ENCODE measurements at regions of chr12 and their contacts with region 1.

Region 1: GRCh38 chr12:92439407-92439779 is 263.4 kb upstream of the PLEKHG7 start:
- DNase-seq: no peak
- ATAC-seq: no peak
- H3K4me3 ChIP-seq: no peak overlapping the region
- H3K4me3 Mint-ChIP-seq: no peak overlapping the region
- H3K27ac ChIP-seq: no peak overlapping the region
- H3K27ac Mint-ChIP-seq: no peak overlapping the region
- H3K4me1 ChIP-seq: peaks cover 0 to 7% of the 10 kb centered on the region in 2 donors
- H3K4me1 Mint-ChIP-seq: peaks cover 8 to 47% (median 20%) of the 10 kb centered on the region in 7 donors
- H3K27me3 ChIP-seq: no peaks in the 10 kb centered on the region
- H3K27me3 Mint-ChIP-seq: peaks cover 0 to 3% (median 0%) of the 10 kb centered on the region in 5 donors

Region 2: DNA sequence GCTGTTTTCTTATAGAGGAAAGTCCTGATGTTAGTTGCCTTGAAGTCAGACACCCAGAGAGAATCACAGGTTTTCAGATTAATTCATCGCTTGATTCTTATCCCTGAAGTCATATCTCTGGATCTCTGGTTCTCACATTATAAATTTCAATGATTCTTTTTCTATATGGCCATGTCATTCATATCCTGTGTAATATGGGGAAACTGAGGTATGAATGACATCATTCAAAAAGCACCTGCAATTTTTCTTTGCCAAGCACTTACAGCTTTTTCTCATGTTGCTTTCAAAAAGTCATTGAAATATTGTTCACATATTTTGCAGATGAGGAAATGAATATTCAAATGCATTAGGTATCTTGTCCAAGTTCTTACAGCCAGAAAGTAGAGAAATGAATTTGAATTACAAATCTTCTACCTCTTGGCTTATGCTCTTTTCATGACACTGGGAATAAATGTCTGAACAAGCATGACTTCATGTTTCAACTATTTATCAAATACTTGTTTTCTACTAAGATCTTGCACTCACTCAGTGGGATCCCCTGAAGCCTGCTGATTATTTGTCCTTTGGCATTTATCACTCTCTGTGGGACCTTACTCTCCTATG is 26.6 kb before region 1 on chr12:
- CTCF ChIA-PET with region 1: no interaction called
- POLR2A ChIA-PET with region 1: no interaction called
- intact Hi-C with region 1: no loop called
- DNase-seq: no peak
- ATAC-seq: no peak
- H3K4me3 ChIP-seq: no peak overlapping the region
- H3K4me3 Mint-ChIP-seq: no peak overlapping the region
- H3K27ac ChIP-seq: no peak overlapping the region
- H3K27ac Mint-ChIP-seq: peak overlapping the region in 1 of 9 donors; percentile 3
- H3K4me1 ChIP-seq: peaks cover 7 to 10% of the 10 kb centered on the region in 2 donors
- H3K4me1 Mint-ChIP-seq: peaks cover 16 to 60% (median 39%) of the 10 kb centered on the region in 7 donors
- H3K27me3 ChIP-seq: no peaks in the 10 kb centered on the region
- H3K27me3 Mint-ChIP-seq: no peaks in the 10 kb centered on the region

Region 3: GRCh38 chr12:92424338-92424737 is 15.1 kb before region 1 on chr12:
- CTCF ChIA-PET with region 1: no interaction called
- POLR2A ChIA-PET with region 1: interaction called, 4 read pairs
- intact Hi-C with region 1: loop called in 1 of 2 experiments (anchors 2 kb)
- DNase-seq: no peak
- ATAC-seq: no peak
- H3K4me3 ChIP-seq: no peak overlapping the region
- H3K4me3 Mint-ChIP-seq: no peak overlapping the region
- H3K27ac ChIP-seq: no peak overlapping the region
- H3K27ac Mint-ChIP-seq: peak overlapping the region in 2 of 9 donors; percentile 7 to 55
- H3K4me1 ChIP-seq: peaks cover 0 to 4% of the 10 kb centered on the region in 2 donors
- H3K4me1 Mint-ChIP-seq: peaks cover 16 to 60% (median 39%) of the 10 kb centered on the region in 7 donors
- H3K27me3 ChIP-seq: no peaks in the 10 kb centered on the region
- H3K27me3 Mint-ChIP-seq: no peaks in the 10 kb centered on the region

Region 4: GRCh38 chr12:92457458-92458180 is 18.2 kb after region 1 on chr12:
- CTCF ChIA-PET with region 1: no interaction called
- POLR2A ChIA-PET with region 1: no interaction called
- intact Hi-C with region 1: loop called in 1 of 2 experiments (anchors 2 kb)
- DNase-seq: no peak
- ATAC-seq: no peak
- H3K4me3 ChIP-seq: no peak overlapping the region
- H3K4me3 Mint-ChIP-seq: no peak overlapping the region
- H3K27ac ChIP-seq: no peak overlapping the region
- H3K27ac Mint-ChIP-seq: no peak overlapping the region
- H3K4me1 ChIP-seq: peaks cover 4 to 22% of the 10 kb centered on the region in 2 donors
- H3K4me1 Mint-ChIP-seq: peaks cover 5 to 36% (median 12%) of the 10 kb centered on the region in 7 donors
- H3K27me3 ChIP-seq: no peaks in the 10 kb centered on the region
- H3K27me3 Mint-ChIP-seq: no peaks in the 10 kb centered on the region

Region 5: DNA sequence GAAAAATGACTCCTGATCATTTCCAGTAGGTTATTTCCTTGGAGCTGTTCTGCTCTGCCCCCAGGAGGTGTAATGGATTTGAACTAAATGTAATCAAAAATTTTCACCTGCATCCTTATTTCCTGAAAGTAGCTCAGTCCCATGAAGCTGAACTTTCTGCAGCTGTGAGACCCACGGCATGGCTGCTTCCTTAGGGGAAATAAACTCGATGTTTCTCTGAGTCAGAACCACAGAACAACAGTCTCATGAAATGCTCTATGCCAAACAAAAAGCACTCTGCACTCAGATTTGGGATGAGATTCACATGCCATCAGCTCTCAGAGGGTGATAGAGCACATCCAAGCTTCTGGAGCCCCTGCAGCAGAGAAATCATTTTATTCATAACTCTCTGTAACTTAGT is 39.3 kb after region 1 on chr12:
- CTCF ChIA-PET with region 1: no interaction called
- POLR2A ChIA-PET with region 1: no interaction called
- intact Hi-C with region 1: no loop called
- DNase-seq: no peak
- ATAC-seq: no peak
- H3K4me3 ChIP-seq: no peak overlapping the region
- H3K4me3 Mint-ChIP-seq: no peak overlapping the region
- H3K27ac ChIP-seq: no peak overlapping the region
- H3K27ac Mint-ChIP-seq: no peak overlapping the region
- H3K4me1 ChIP-seq: no peaks in the 10 kb centered on the region
- H3K4me1 Mint-ChIP-seq: peaks cover 0 to 11% (median 4%) of the 10 kb centered on the region in 7 donors
- H3K27me3 ChIP-seq: no peaks in the 10 kb centered on the region
- H3K27me3 Mint-ChIP-seq: no peaks in the 10 kb centered on the region

Measured in naive thymus-derived CD4-positive, alpha-beta T cell (primary cell).